CD4-positive, alpha-beta memory T cell (primary cell): ENCODE measurements at regions of chr14 and their contacts with region 1.

Region 1: GRCh38 chr14:103078093-103078749 is 5.8 kb upstream of the LBHD2 start:
- DNase-seq: peak; percentile 70 to 84 (median 80)
- H3K4me3 ChIP-seq: no peak overlapping the region
- H3K4me3 Mint-ChIP-seq: peak overlapping the region in 2 of 8 donors; percentile 12 to 37
- H3K27ac ChIP-seq: no peak overlapping the region
- H3K27ac Mint-ChIP-seq: peak overlapping the region in 2 of 7 donors; percentile 43 to 51
- H3K4me1 ChIP-seq: peaks cover 13% of the 10 kb centered on the region
- H3K4me1 Mint-ChIP-seq: peaks cover 0 to 5% (median 0%) of the 10 kb centered on the region in 4 donors
- H3K27me3 ChIP-seq: no peaks in the 10 kb centered on the region
- H3K27me3 Mint-ChIP-seq: peaks cover 0 to 2% of the 10 kb centered on the region in 2 donors

Region 2: GRCh38 chr14:103014466-103015319 is 63.5 kb before region 1 on chr14:
- CTCF ChIA-PET with region 1: no interaction called
- POLR2A ChIA-PET with region 1: no interaction called
- intact Hi-C with region 1: no loop called
- DNase-seq: no peak
- H3K4me3 ChIP-seq: no peak overlapping the region
- H3K4me3 Mint-ChIP-seq: no peak overlapping the region
- H3K27ac ChIP-seq: no peak overlapping the region
- H3K27ac Mint-ChIP-seq: peak overlapping the region in 3 of 7 donors; percentile 5 to 51 (median 8)
- H3K4me1 ChIP-seq: no peaks in the 10 kb centered on the region
- H3K4me1 Mint-ChIP-seq: peaks cover 2 to 17% (median 7%) of the 10 kb centered on the region in 4 donors
- H3K27me3 ChIP-seq: no peaks in the 10 kb centered on the region
- H3K27me3 Mint-ChIP-seq: peaks cover 0 to 4% of the 10 kb centered on the region in 2 donors

Region 3: DNA sequence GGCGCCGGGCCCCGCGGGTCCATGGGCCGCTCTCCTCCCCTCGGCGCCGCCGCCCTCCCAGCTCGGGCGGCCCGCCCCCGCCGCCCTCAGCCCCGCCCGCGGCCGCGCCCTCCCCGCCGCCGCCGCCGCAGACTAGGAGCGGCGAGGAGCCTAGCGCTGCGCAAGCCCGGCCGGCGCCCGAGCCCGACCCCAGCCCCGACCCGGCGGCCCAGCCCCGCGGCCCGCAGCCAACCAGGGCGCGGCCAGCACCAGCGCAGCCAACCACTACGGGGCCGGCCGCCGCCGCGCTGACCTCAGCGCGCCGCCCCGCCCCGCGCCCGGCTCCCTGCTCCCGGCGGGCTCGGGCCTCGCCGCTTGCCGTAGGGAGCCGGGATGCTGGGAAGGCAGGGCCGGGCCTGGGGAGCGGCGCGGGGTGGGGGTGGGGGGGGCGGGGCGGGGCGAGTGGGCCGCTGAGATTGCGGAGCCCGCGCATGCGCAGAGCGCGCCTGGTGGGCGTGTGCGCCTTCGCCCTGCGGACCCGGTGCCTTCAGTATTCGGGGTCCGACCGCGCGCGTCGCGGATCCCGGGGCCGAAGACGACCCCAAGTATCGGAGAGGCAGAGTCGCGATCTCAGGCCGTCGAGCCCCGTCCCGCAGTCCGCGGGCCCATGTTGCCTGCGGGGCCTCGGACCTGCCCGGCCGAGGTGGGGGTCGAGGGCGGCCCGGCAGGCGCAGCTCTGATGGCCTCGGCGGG is 20.7 kb before region 1 on chr14 and contains the start of gene CDC42BPB:
- CTCF ChIA-PET with region 1: interaction called, 6 read pairs
- POLR2A ChIA-PET with region 1: no interaction called
- intact Hi-C with region 1: loop called (anchors 1 kb)
- DNase-seq: peak; percentile 58 to 66 (median 64)
- H3K4me3 ChIP-seq: peak within 1 kb of the TSS in 1 of 2 donors; percentile 47
- H3K4me3 Mint-ChIP-seq: peak within 1 kb of the TSS; percentile 66 to 86 (median 79)
- H3K27ac ChIP-seq: no peak within 1 kb of the TSS
- H3K27ac Mint-ChIP-seq: peak within 1 kb of the TSS in 2 of 7 donors; percentile 39 to 57
- H3K4me1 ChIP-seq: peaks cover 6% of the 10 kb centered on the region
- H3K4me1 Mint-ChIP-seq: peaks cover 9 to 13% (median 11%) of the 10 kb centered on the region in 4 donors
- H3K27me3 ChIP-seq: no peaks in the 10 kb centered on the region
- H3K27me3 Mint-ChIP-seq: peaks cover 6 to 10% of the 10 kb centered on the region in 2 donors
- total RNA-seq, gene CDC42BPB: 7.5 to 8.4 TPM

Region 4: GRCh38 chr14:103091041-103091882 is 13.0 kb after region 1 on chr14:
- CTCF ChIA-PET with region 1: interaction called, 9 read pairs
- POLR2A ChIA-PET with region 1: no interaction called
- intact Hi-C with region 1: loop called (anchors 1 kb)
- DNase-seq: peak; percentile 56 to 78 (median 66)
- H3K4me3 ChIP-seq: peak overlapping the region in 1 of 2 donors; percentile 45
- H3K4me3 Mint-ChIP-seq: peak overlapping the region; percentile 5 to 74 (median 54)
- H3K27ac ChIP-seq: no peak overlapping the region
- H3K27ac Mint-ChIP-seq: peak overlapping the region in 1 of 7 donors; percentile 27
- H3K4me1 ChIP-seq: peaks cover 10% of the 10 kb centered on the region
- H3K4me1 Mint-ChIP-seq: peaks cover 0 to 4% (median 0%) of the 10 kb centered on the region in 4 donors
- H3K27me3 ChIP-seq: no peaks in the 10 kb centered on the region
- H3K27me3 Mint-ChIP-seq: peaks cover 3 to 7% of the 10 kb centered on the region in 2 donors

Region 5: DNA sequence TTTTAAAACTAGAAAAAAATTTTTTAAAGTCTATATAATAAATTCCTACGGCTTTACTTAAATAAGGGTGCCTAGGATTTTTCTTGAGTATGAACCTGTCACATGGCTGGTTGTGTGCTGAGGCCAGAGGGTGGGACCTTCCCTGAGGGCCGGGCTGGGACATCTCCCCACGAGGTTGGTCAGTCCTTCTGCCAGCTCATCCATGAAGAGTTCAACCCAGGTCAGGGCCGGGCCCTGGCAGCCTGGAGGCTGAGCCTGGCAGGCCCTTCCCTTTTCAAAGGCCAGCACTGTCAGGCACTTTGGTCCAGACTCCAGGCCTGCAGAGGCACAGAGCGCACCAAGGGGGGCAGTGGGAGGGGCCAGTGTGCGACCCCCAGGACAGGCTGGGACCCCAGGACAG is 76.8 kb after region 1 on chr14:
- CTCF ChIA-PET with region 1: no interaction called
- POLR2A ChIA-PET with region 1: no interaction called
- intact Hi-C with region 1: no loop called
- DNase-seq: no peak
- H3K4me3 ChIP-seq: no peak overlapping the region
- H3K4me3 Mint-ChIP-seq: no peak overlapping the region
- H3K27ac ChIP-seq: no peak overlapping the region
- H3K27ac Mint-ChIP-seq: no peak overlapping the region
- H3K4me1 ChIP-seq: no peaks in the 10 kb centered on the region
- H3K4me1 Mint-ChIP-seq: no peaks in the 10 kb centered on the region
- H3K27me3 ChIP-seq: no peaks in the 10 kb centered on the region
- H3K27me3 Mint-ChIP-seq: peaks cover 8 to 13% of the 10 kb centered on the region in 2 donors